ENCODE measurements at regions of chr10 and their contacts with region 1.

Region 1: GRCh38 chr10:7525314-7526016 is 114.6 kb upstream of the SFMBT2 start:
- DNase-seq: peak in 1 of 3 donors; percentile 63
- ATAC-seq: peak; percentile 91 to 97 (median 94)
- H3K4me3 ChIP-seq: no peak overlapping the region
- H3K27ac ChIP-seq: no peak overlapping the region
- H3K4me1 ChIP-seq: no peaks in the 10 kb centered on the region
- H3K27me3 ChIP-seq: no peaks in the 10 kb centered on the region
- CTCF ChIP-seq: peak; percentile 79 to 89 (median 82)
- POLR2A ChIP-seq: no peak

Region 2: GRCh38 chr10:7484456-7485243 is 40.8 kb before region 1 on chr10:
- intact Hi-C with region 1: no loop called
- DNase-seq: no peak
- ATAC-seq: peak; percentile 51 to 71 (median 58)
- H3K4me3 ChIP-seq: no peak overlapping the region
- H3K27ac ChIP-seq: peak overlapping the region in 1 of 3 donors; percentile 40
- H3K4me1 ChIP-seq: peaks cover 0 to 14% (median 0%) of the 10 kb centered on the region in 4 donors
- H3K27me3 ChIP-seq: no peaks in the 10 kb centered on the region
- CTCF ChIP-seq: no peak
- POLR2A ChIP-seq: no peak

Region 3: GRCh38 chr10:7572391-7572790 is 46.9 kb after region 1 on chr10:
- intact Hi-C with region 1: no loop called
- DNase-seq: no peak
- ATAC-seq: peak in 1 of 4 donors; percentile 37
- H3K4me3 ChIP-seq: no peak overlapping the region
- H3K27ac ChIP-seq: no peak overlapping the region
- H3K4me1 ChIP-seq: no peaks in the 10 kb centered on the region
- H3K27me3 ChIP-seq: no peaks in the 10 kb centered on the region
- CTCF ChIP-seq: no peak
- POLR2A ChIP-seq: no peak

Region 4: GRCh38 chr10:7671121-7671520 is 145.7 kb after region 1 on chr10:
- intact Hi-C with region 1: loop called in 1 of 2 experiments (anchors 10 kb)
- DNase-seq: no peak
- ATAC-seq: no peak
- H3K4me3 ChIP-seq: no peak overlapping the region
- H3K27ac ChIP-seq: no peak overlapping the region
- H3K4me1 ChIP-seq: peaks cover 0 to 5% (median 0%) of the 10 kb centered on the region in 4 donors
- H3K27me3 ChIP-seq: no peaks in the 10 kb centered on the region
- CTCF ChIP-seq: no peak
- POLR2A ChIP-seq: no peak

Region 5: DNA sequence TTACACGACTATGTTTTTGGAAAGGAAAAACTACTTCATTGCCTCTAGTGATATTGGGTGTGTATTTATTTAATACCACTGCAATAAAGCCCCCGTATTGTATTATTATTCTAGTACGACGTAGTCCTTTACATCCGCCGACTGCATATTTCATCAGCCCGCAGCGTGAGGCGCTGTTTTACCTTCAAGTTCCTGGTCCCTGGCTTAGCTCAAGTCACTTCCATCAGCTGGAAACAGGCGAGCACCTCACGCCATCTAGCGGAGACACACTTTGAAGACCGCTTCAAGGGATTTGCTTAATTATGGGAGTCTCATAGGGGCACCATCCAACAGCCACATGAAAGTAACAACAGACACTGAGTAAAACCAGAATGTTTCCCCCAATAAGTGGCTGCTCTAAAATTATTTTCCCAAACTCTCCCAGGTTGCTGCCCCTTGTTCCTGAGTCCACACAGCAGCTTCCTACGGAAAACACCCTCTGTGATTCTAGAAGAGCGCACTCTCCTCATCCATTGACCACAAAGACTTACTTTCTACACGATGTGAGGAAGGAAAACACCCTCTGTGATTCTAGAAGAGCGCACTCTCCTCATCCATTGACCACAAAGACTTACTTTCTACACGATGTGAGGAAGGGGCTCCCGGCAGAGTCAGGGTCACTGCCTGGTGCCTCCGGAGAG is 161.9 kb after region 1 on chr10:
- intact Hi-C with region 1: loop called in 1 of 2 experiments (anchors 5 kb)
- DNase-seq: peak; percentile 73 to 87 (median 84)
- ATAC-seq: peak; percentile 99 to 100 (median 100)
- H3K4me3 ChIP-seq: no peak overlapping the region
- H3K27ac ChIP-seq: no peak overlapping the region
- H3K4me1 ChIP-seq: no peaks in the 10 kb centered on the region
- H3K27me3 ChIP-seq: no peaks in the 10 kb centered on the region
- CTCF ChIP-seq: peak; percentile 90 to 96 (median 94)
- POLR2A ChIP-seq: no peak

Region 6: GRCh38 chr10:7707858-7708622 is 182.6 kb after region 1 on chr10:
- intact Hi-C with region 1: no loop called
- DNase-seq: no peak
- ATAC-seq: peak; percentile 27 to 55 (median 54)
- H3K4me3 ChIP-seq: peak overlapping the region in 2 of 3 donors; percentile 26 to 53
- H3K27ac ChIP-seq: peak overlapping the region; percentile 54 to 87 (median 55)
- H3K4me1 ChIP-seq: peaks cover 0 to 45% (median 6%) of the 10 kb centered on the region in 4 donors
- H3K27me3 ChIP-seq: no peaks in the 10 kb centered on the region
- CTCF ChIP-seq: no peak
- POLR2A ChIP-seq: no peak

Measured in right lobe of liver (tissue), 6 donors.